ENCODE measurements at regions of chr7 and their contacts with region 1.

Region 1: DNA sequence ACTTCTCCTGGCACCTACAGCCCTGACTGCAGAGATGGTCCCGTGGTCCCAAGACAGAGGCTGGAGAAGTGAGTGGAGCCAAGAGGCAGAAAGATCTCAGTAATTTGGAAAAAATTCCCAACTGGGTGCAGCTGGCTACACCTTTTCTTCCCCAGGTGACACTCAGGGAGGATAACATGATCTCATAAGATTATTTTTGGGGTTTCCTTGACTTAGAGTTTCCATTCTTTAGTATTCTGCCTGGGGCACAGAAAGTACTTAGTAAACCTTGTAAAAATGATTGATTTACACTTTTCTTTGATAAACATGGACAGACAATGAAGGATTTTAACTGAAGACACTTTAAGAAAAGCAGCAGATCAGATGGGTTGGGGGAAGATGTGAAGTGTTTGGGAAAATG is 38.6 kb downstream of the HECW1 start:
- DNase-seq: no peak
- ATAC-seq: no peak
- H3K4me3 ChIP-seq: no peak overlapping the region
- H3K27ac ChIP-seq: no peak overlapping the region
- H3K4me1 ChIP-seq: no peaks in the 10 kb centered on the region
- H3K27me3 ChIP-seq: no peaks in the 10 kb centered on the region
- CTCF ChIP-seq: no peak

Region 2: GRCh38 chr7:43137811-43138210 is 13.3 kb before region 1 on chr7:
- intact Hi-C with region 1: loop called in 1 of 2 experiments (anchors 1 kb)
- DNase-seq: no peak
- ATAC-seq: no peak
- H3K4me3 ChIP-seq: no peak overlapping the region
- H3K27ac ChIP-seq: no peak overlapping the region
- H3K4me1 ChIP-seq: no peaks in the 10 kb centered on the region
- H3K27me3 ChIP-seq: no peaks in the 10 kb centered on the region
- CTCF ChIP-seq: no peak

Region 3: DNA sequence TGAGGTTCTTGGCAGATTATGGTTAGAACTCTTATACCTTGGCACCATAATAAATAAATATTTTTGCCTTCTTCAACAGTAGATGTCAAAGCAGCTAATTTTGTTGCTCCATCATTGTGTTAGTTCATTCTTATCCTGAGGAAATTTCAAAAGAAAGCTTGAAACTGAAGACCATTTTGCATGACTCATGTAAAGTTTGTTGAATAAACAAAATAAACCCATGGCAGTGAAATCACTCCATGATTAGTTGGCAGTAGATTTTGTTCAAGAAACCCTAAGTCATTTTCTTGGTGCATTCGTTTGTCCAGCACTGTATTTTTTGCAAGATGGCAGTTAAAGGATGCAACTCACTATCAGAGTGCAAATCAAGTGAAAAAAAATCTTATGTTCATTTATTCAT is 53.0 kb after region 1 on chr7:
- intact Hi-C with region 1: no loop called
- DNase-seq: no peak
- ATAC-seq: no peak
- H3K4me3 ChIP-seq: no peak overlapping the region
- H3K27ac ChIP-seq: no peak overlapping the region
- H3K4me1 ChIP-seq: no peaks in the 10 kb centered on the region
- H3K27me3 ChIP-seq: peaks cover 0 to 7% (median 3%) of the 10 kb centered on the region in 3 donors
- CTCF ChIP-seq: no peak

Measured in psoas muscle (tissue), 8 donors.